Heart right ventricle (tissue), 16 donors: ENCODE measurements at regions of chr16 and their contacts with region 1.

Region 1: DNA sequence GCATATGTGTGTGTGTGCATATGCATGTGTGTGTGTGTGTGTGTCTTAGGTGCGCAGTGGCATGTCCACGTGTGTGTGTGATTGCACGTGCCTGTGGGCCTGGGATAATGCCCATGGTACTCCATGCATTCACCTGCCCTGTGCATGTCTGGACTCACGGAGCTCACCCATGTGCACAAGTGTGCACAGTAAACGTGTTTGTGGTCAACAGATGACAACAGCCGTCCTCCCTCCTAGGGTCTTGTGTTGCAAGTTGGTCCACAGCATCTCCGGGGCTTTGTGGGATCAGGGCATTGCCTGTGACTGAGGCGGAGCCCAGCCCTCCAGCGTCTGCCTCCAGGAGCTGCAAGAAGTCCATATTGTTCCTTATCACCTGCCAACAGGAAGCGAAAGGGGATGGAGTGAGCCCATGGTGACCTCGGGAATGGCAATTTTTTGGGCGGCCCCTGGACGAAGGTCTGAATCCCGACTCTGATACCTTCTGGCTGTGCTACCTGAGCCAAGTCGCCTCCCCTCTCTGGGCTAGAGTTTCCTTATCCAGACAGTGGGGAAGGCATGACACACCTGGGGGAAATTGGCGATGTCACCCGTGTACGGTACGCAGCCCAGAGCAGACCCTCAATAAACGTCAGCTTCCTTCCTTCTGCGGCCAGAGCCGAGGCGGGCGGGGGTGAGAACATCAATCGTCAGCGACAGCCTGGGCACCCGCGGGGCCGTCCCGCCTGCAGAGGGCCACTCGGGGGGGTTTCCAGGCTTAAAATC is 47.6 kb downstream of the IL21R start:
- DNase-seq: no peak
- ATAC-seq: peak in 5 of 8 donors; percentile 18 to 63 (median 35)
- H3K4me3 ChIP-seq: no peak overlapping the region
- H3K27ac ChIP-seq: peak overlapping the region in 1 of 10 donors; percentile 34
- H3K4me1 ChIP-seq: peaks cover 0 to 13% (median 0%) of the 10 kb centered on the region in 9 donors
- H3K27me3 ChIP-seq: peaks cover 0 to 54% (median 39%) of the 10 kb centered on the region in 7 donors
- CTCF ChIP-seq: no peak

Region 2: GRCh38 chr16:27189335-27189972 is 260.2 kb before region 1 on chr16:
- intact Hi-C with region 1: loop called in 2 of 10 experiments (anchors 5 to 10 kb)
- DNase-seq: no peak
- ATAC-seq: no peak
- H3K4me3 ChIP-seq: no peak overlapping the region
- H3K27ac ChIP-seq: no peak overlapping the region
- H3K4me1 ChIP-seq: no peaks in the 10 kb centered on the region
- H3K27me3 ChIP-seq: peaks cover 0 to 24% (median 11%) of the 10 kb centered on the region in 7 donors
- CTCF ChIP-seq: no peak

Region 3: GRCh38 chr16:27326738-27327585 is 122.7 kb before region 1 on chr16:
- intact Hi-C with region 1: no loop called
- DNase-seq: peak; percentile 63 to 73
- ATAC-seq: peak; percentile 36 to 90 (median 72)
- H3K4me3 ChIP-seq: peak overlapping the region in 2 of 10 donors; percentile 14 to 35
- H3K27ac ChIP-seq: peak overlapping the region; percentile 50 to 100 (median 86)
- H3K4me1 ChIP-seq: peaks cover 9 to 99% (median 47%) of the 10 kb centered on the region in 9 donors
- H3K27me3 ChIP-seq: no peaks in the 10 kb centered on the region
- CTCF ChIP-seq: peak in 2 of 9 donors; percentile 4 to 9

Region 4: GRCh38 chr16:27374804-27375425 is 74.7 kb before region 1 on chr16:
- intact Hi-C with region 1: loop called in 2 of 10 experiments (anchors 10 kb)
- DNase-seq: peak; percentile 59 to 63
- ATAC-seq: peak; percentile 69 to 90 (median 86)
- H3K4me3 ChIP-seq: peak overlapping the region in 2 of 10 donors; percentile 8 to 36
- H3K27ac ChIP-seq: peak overlapping the region in 3 of 10 donors; percentile 0 to 81 (median 0)
- H3K4me1 ChIP-seq: peaks cover 0 to 66% (median 0%) of the 10 kb centered on the region in 9 donors
- H3K27me3 ChIP-seq: no peaks in the 10 kb centered on the region
- CTCF ChIP-seq: peak; percentile 15 to 60 (median 41)